Activated CD4-positive, alpha-beta T cell treated with anti-CD3 and anti-CD28 coated beads, Interleukin-2, amount 10 ng/mL, durations not matched to agents 24 days and 14 days (primary cell): ENCODE measurements at regions of chrX and their contacts with region 1.

Region 1: DNA sequence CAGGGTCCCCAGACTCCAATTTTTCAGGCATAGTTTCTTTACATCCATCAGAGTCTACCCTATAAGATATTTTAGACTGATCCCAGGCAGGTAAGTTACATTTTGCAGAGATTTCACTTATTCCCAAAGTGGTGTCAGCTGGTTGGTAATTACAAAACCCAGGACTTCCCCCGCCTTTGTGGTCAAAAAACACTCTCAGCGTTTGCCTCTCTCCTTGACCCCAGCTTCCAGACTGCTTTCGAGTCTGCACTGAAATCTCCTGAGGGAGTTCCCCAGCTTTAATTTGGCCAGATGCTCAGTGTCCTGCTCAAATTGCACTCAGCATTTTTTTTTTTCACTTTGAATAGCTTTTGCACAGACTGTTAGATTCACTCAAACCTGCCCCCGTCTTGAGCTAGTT is 11.2 kb upstream of the AMOT start:
- DNase-seq: peak; percentile 55
- H3K4me3 Mint-ChIP-seq: no peak overlapping the region
- H3K27ac Mint-ChIP-seq: no peak overlapping the region
- H3K4me1 Mint-ChIP-seq: peaks cover 23% of the 10 kb centered on the region
- H3K27me3 Mint-ChIP-seq: peaks cover 3% of the 10 kb centered on the region

Region 2: DNA sequence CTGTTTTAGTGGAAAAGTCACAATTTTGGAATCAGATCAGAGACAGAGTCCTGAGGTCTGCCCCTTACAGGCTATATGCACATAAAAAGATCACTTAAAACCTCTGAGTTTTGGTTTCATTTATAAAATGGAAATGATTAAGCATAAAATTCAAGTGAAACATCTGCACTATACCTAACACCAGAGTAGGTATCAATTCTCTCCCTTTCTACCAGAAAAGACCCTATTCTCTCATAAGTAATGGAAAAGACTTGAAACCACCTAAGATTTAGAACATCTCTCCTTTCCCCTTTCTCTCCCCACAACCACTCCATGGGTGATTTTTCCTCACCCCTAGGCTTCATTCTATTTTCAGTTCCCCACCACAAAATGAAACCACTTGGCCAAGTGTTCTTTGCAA is 173.0 kb before region 1 on chrX:
- intact Hi-C with region 1: loop called (anchors 2 kb)
- DNase-seq: no peak
- H3K4me3 Mint-ChIP-seq: peak overlapping the region; percentile 77
- H3K27ac Mint-ChIP-seq: peak overlapping the region; percentile 87
- H3K4me1 Mint-ChIP-seq: peaks cover 28% of the 10 kb centered on the region
- H3K27me3 Mint-ChIP-seq: no peaks in the 10 kb centered on the region

Region 3: GRCh38 chrX:112840382-112841113 is 11.3 kb before region 1 on chrX and contains the start of gene AMOT:
- intact Hi-C with region 1: loop called (anchors 1 kb)
- DNase-seq: peak; percentile 88
- H3K4me3 Mint-ChIP-seq: peak within 1 kb of the TSS; percentile 87
- H3K27ac Mint-ChIP-seq: peak within 1 kb of the TSS; percentile 45
- H3K4me1 Mint-ChIP-seq: peaks cover 20% of the 10 kb centered on the region
- H3K27me3 Mint-ChIP-seq: peaks cover 8% of the 10 kb centered on the region
- total RNA-seq, gene AMOT: 2.5 TPM in 2 replicates